ENCODE measurements at regions of chr6 and their contacts with region 1.

Region 1: DNA sequence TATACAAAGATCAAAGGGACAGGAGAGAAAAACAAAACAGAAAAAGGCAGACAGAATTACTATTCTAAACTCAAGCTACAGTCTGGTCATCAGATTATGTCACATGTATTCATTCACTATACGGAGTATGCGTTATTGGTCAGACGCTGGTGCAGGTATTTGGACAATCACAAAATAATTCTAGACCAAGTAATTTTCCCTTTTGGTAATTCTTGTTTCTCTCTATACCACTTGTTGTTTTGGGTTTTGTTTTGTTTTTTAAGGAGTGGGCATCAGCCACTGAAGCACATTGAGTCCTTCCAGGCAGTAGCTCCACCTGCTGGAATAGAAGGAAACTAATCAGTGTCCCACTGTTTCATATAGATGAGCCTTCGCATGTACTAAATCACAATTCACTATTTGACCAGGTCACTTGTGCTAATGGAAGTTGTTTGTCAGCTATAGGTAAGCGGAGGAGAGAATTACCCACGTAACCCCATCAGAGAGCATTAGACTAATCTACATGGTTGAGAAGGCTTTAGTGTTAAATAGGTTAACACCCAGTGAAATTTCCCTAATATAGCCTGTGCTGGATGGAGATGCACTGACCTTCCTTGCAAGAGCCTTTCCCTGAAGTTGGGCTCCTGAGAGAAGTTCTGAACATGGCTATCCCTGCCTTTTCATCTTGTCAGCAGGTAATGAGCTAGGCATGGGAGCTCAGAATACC is 77.9 kb downstream of the TNFAIP3 start:
- DNase-seq: no peak
- H3K4me3 ChIP-seq: no peak overlapping the region
- CTCF ChIP-seq: peak; percentile 68

Region 2: DNA sequence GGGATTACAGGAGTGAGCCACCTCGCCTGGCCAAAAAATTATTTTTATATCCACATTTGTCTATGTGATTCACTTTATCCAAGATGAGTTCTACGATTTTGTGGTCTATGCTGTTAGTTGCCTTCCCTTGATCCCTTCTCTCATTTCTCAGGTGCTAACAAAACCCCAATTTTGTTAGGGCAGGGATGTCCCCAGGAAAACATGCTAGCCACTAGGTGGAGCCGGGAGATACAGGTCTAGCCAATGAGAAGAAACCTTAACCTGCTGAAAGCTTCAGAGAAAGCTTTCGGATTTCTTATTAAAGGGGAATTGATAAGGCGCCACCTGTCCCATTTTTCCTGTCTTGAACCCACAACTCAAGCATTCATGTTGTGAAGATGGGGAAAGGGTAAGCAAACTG is 283.3 kb before region 1 on chr6:
- CTCF ChIA-PET with region 1: interaction called, 11 read pairs
- POLR2A ChIA-PET with region 1: no interaction called
- DNase-seq: no peak
- H3K4me3 ChIP-seq: no peak overlapping the region
- CTCF ChIP-seq: peak; percentile 38

Region 3: GRCh38 chr6:137717074-137718073 is 227.6 kb before region 1 on chr6:
- CTCF ChIA-PET with region 1: interaction called, 16 read pairs
- POLR2A ChIA-PET with region 1: no interaction called
- DNase-seq: no peak
- H3K4me3 ChIP-seq: no peak overlapping the region
- CTCF ChIP-seq: no peak

Region 4: GRCh38 chr6:137866914-137867684 is 77.8 kb before region 1 on chr6 and contains the start of gene TNFAIP3:
- CTCF ChIA-PET with region 1: interaction called, 262 read pairs
- POLR2A ChIA-PET with region 1: interaction called, 3 read pairs
- DNase-seq: no peak
- H3K4me3 ChIP-seq: peak within 1 kb of the TSS; percentile 92
- CTCF ChIP-seq: peak; percentile 77

Region 5: DNA sequence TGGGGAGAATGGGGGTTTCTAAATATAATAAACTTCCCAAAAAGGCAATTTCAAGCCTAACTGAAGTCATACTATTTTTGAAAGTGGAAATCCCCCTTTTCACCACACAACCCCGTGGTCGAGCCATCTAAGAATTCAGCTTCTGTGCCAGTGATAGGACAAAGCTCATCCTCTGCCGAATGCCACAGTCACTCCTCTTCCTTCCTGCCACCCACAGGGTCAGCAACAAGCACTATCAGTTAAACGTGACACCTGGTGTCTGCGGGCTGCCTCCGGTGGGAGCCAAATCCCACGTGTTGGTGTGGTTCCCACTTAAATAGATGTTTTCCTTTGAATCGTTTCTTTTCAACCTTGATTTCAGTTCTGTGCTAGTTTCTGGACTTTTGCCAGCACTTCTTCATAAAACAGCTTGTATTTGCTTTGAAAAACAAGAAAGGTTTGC is 17.1 kb before region 1 on chr6:
- CTCF ChIA-PET with region 1: interaction called, 40 read pairs
- POLR2A ChIA-PET with region 1: no interaction called
- DNase-seq: no peak
- H3K4me3 ChIP-seq: no peak overlapping the region
- CTCF ChIP-seq: no peak

Region 6: DNA sequence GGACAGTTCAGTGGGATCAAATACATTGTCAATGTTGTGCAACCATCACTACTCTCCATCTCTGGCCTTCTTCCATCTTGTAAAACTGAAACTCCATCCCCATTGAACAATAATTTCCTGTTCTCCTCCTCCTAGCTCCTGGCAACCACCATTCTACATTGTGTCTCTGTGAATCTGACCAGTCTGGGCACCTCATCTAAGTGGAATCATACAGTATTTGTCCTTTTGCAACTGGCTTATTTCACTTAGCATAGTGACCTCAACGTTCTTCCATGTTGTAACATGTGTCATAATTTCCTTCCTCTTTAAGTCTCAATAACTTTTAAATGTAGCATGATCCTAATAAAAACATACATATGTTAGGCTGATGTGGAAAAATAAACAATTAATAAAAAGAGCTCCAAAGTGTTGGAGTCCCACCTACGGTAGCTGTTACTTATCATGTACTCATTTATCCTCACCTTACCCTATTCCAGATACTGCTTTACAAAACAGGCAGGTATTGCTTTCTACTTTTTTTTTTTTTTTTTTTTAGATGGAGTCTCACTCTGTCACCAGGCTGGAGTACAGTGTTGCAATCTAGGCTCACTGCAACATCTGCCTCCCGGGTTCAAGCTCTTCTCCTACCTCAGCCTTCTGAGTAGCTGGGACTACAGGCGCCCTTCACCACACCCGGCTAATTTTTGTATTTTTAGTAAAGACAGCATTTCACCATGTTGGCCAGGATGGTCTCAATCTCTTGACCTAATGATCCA is 14.0 kb after region 1 on chr6:
- CTCF ChIA-PET with region 1: interaction called, 38 read pairs
- POLR2A ChIA-PET with region 1: no interaction called
- DNase-seq: no peak
- H3K4me3 ChIP-seq: no peak overlapping the region
- CTCF ChIP-seq: no peak

Region 7: GRCh38 chr6:138250513-138251247 is 305.7 kb after region 1 on chr6:
- CTCF ChIA-PET with region 1: no interaction called
- POLR2A ChIA-PET with region 1: no interaction called
- DNase-seq: peak; percentile 72
- H3K4me3 ChIP-seq: no peak overlapping the region
- CTCF ChIP-seq: no peak

Measured in AG04449 (cell line).